Pancreas (tissue), 10 donors: ENCODE measurements at regions of chr15 and their contacts with region 1.

Region 1: DNA sequence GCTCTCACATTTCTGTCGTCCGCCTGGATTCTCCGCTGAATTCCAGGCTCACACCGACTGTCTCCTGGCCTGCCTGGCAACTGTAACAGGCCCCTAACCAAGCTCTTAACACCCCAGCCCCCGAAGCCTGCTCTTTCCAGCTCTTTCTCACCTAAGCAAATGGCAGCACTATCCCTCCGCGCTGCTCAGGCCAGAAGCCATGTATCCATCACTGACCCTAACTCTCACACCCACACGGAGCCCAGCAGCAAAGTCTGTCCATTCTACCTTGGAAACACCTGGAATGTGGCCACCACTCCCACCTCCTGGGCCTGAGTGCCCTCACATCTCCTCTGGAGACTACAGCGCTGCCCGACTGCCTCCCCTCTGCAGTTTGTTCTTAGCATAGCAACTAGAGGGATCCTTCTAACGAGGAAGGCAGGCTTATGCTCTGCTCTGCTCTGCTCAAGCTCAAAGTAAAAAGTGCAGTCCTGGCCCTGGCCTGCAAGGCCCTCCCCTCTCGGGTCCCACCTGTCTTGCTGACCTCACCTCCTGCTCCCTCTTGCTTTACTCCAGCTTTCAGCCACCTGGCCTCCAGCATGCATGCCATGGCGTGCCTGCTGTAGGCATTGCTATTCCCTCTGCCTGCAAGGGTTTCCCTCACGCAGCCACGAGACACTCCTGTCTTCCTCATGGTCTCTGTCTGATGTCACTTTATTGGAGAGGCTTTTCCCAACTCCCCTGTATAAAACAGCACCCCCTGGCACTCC is 27.2 kb downstream of the FEM1B start:
- DNase-seq: no peak
- ATAC-seq: no peak
- H3K4me3 ChIP-seq: no peak overlapping the region
- H3K27ac ChIP-seq: no peak overlapping the region
- H3K4me1 ChIP-seq: peaks cover 0 to under 1% (median 0%) of the 10 kb centered on the region in 3 donors
- H3K27me3 ChIP-seq: no peaks in the 10 kb centered on the region
- CTCF ChIP-seq: no peak

Region 2: DNA sequence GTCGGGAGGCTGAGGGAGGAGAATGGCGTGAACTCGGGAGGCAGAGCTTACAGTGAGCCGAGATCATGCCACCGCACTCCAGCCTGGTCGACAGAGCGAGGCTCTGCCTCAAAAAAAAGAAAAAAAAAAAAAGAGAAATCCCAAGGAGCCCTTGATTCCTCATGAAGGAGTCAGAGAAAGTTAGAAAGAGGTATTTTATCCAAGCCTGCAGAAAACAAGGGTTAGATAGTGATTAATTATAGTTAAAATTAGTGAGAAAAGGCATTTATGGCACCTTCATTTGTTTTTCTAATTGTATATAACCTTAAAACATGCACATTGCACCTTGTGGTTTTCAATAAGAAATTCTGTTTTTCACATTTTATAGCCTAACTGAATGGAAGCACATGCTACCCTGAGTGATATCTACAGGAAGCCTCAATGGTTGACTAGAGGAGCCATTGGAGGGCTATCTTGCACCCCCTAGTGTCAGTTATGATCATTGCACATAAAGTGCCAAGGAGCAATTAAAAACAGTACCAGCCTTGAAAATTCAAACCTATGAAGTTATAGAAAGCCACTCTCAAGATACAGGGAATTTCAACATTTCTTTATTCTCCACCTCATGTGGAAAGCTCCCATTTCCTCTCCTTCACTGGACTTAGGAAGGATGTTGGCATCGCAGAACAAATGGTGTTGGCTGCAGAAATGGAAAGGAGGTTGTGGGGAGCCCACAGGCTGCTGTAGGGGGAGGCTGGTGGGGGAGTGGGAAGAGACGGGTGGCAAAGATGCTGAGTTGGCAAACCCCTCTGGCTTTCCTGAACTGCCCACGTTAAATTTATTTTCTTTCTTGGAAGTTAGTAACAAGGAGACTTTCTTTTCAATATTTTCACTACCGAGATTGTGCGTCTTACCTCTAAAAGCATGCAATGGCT is 78.7 kb after region 1 on chr15:
- intact Hi-C with region 1: loop called in 2 of 3 experiments (anchors 5 to 10 kb)
- DNase-seq: peak in 1 of 6 donors; percentile 28
- ATAC-seq: peak in 3 of 4 donors; percentile 71 to 88 (median 79)
- H3K4me3 ChIP-seq: no peak overlapping the region
- H3K27ac ChIP-seq: no peak overlapping the region
- H3K4me1 ChIP-seq: no peaks in the 10 kb centered on the region
- H3K27me3 ChIP-seq: no peaks in the 10 kb centered on the region
- CTCF ChIP-seq: peak; percentile 46 to 62 (median 52)

Region 3: GRCh38 chr15:68389936-68390790 is 85.4 kb after region 1 on chr15:
- intact Hi-C with region 1: loop called in 2 of 3 experiments (anchors 5 to 10 kb)
- DNase-seq: no peak
- ATAC-seq: no peak
- H3K4me3 ChIP-seq: no peak overlapping the region
- H3K27ac ChIP-seq: no peak overlapping the region
- H3K4me1 ChIP-seq: no peaks in the 10 kb centered on the region
- H3K27me3 ChIP-seq: no peaks in the 10 kb centered on the region
- CTCF ChIP-seq: no peak